Ovary (tissue), 10 donors: ENCODE measurements at regions of chr3 and their contacts with region 1.

Region 1: DNA sequence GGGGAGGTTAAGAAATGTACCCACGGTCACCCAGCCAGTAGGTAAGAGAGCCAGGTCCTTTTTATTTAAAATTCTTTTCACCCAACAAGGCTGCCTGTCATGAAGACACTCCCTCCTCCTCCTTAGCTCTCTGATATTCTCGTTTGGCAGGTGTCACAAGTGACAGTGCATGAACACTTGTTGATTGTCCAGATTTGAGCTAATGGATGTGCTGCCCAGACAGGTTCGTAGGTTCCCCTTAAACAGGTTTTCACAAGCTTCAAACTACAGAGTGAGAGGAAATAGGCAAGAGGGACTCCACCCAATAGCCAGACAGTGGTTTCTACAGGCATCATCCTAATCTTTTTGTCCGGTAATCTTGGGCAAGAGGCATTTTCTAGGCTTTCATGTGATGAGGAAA is 32.2 kb downstream of the ATP13A4 start:
- DNase-seq: no peak
- H3K4me3 ChIP-seq: no peak overlapping the region
- H3K27ac ChIP-seq: no peak overlapping the region
- H3K4me1 ChIP-seq: no peaks in the 10 kb centered on the region
- H3K27me3 ChIP-seq: no peaks in the 10 kb centered on the region
- CTCF ChIP-seq: no peak
- EP300 ChIP-seq: no peak
- POLR2A ChIP-seq: no peak

Region 2: GRCh38 chr3:193446965-193447602 is 75.4 kb before region 1 on chr3:
- intact Hi-C with region 1: loop called in 1 of 4 experiments (anchors 5 kb)
- DNase-seq: no peak
- H3K4me3 ChIP-seq: no peak overlapping the region
- H3K27ac ChIP-seq: no peak overlapping the region
- H3K4me1 ChIP-seq: no peaks in the 10 kb centered on the region
- H3K27me3 ChIP-seq: no peaks in the 10 kb centered on the region
- CTCF ChIP-seq: no peak
- EP300 ChIP-seq: no peak
- POLR2A ChIP-seq: no peak